CD8-positive, alpha-beta T cell (primary cell): ENCODE measurements at regions of chr21 and their contacts with region 1.

Region 1: GRCh38 chr21:42781150-42781970 is 98.0 kb downstream of the WDR4 start:
- DNase-seq: peak in 1 of 9 experiments; percentile 15
- ATAC-seq: no peak
- H3K4me3 ChIP-seq: peak overlapping the region in 1 of 2 experiments; percentile 5
- H3K4me3 Mint-ChIP-seq: peak overlapping the region; percentile 47
- H3K27ac ChIP-seq: no peak overlapping the region
- H3K27ac Mint-ChIP-seq: no peak overlapping the region
- H3K4me1 ChIP-seq: peaks cover 44% of the 10 kb centered on the region
- H3K4me1 Mint-ChIP-seq: peaks cover 51% of the 10 kb centered on the region
- H3K27me3 ChIP-seq: no peaks in the 10 kb centered on the region
- H3K27me3 Mint-ChIP-seq: no peaks in the 10 kb centered on the region
- CTCF ChIP-seq: no peak

Region 2: GRCh38 chr21:42737951-42738590 is 43.3 kb before region 1 on chr21:
- CTCF ChIA-PET with region 1: interaction called, 4 read pairs
- POLR2A ChIA-PET with region 1: interaction called, 4 read pairs
- intact Hi-C with region 1: loop called in 1 of 2 experiments (anchors 2 kb)
- DNase-seq: peak in 5 of 9 experiments; percentile 27 to 71 (median 52)
- ATAC-seq: peak; percentile 86
- H3K4me3 ChIP-seq: peak overlapping the region in 1 of 2 experiments; percentile 33
- H3K4me3 Mint-ChIP-seq: peak overlapping the region; percentile 72
- H3K27ac ChIP-seq: peak overlapping the region; percentile 51 to 55
- H3K27ac Mint-ChIP-seq: peak overlapping the region; percentile 99
- H3K4me1 ChIP-seq: peaks cover 48% of the 10 kb centered on the region
- H3K4me1 Mint-ChIP-seq: peaks cover 47% of the 10 kb centered on the region
- H3K27me3 ChIP-seq: no peaks in the 10 kb centered on the region
- H3K27me3 Mint-ChIP-seq: no peaks in the 10 kb centered on the region
- CTCF ChIP-seq: no peak

Region 3: GRCh38 chr21:42746593-42747275 is 34.6 kb before region 1 on chr21:
- CTCF ChIA-PET with region 1: interaction called, 3 read pairs
- POLR2A ChIA-PET with region 1: interaction called, 47 read pairs
- intact Hi-C with region 1: loop called in 1 of 2 experiments (anchors 2 kb)
- DNase-seq: peak; percentile 22 to 82 (median 64)
- ATAC-seq: peak; percentile 79
- H3K4me3 ChIP-seq: peak overlapping the region; percentile 12 to 27
- H3K4me3 Mint-ChIP-seq: peak overlapping the region; percentile 75
- H3K27ac ChIP-seq: peak overlapping the region; percentile 63 to 76
- H3K27ac Mint-ChIP-seq: peak overlapping the region; percentile 97
- H3K4me1 ChIP-seq: peaks cover 29% of the 10 kb centered on the region
- H3K4me1 Mint-ChIP-seq: peaks cover 33% of the 10 kb centered on the region
- H3K27me3 ChIP-seq: no peaks in the 10 kb centered on the region
- H3K27me3 Mint-ChIP-seq: no peaks in the 10 kb centered on the region
- CTCF ChIP-seq: no peak